Mammary epithelial cell (primary cell): ENCODE measurements at regions of chr10 and their contacts with region 1.

Region 1: DNA sequence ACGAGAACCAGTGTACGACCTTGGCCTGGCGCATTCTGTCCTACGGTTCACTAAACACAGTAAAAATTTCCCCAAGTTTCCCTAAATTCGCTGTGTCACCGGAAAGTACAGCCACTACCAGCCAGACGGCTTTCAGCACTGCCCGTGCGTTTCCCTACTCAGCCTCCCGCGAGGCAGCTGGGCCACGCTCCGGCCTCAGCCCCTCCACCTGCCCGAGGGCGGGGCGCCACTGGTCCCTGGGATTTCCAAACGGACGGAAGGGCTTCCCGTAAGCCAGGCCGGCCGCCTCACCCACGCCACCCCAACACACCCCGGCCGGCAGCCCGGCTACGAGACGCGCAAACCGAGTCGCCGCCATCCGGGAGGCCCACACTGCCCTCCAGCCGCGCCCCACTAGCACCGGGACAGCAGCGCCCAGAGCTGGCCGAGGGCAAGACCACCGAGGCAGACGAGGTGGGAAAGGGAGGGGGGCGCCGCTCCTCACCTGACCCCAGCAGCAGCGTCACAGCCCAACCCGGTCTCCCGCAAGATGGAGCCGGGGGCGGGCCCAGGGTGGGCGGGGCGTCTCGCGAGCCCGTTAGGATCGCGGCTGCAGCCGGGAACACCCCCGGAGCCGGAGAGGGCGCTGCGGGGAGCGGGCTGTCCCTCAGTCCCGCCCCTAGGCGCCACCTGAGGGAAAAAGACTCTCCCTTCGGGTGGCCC is at the start of gene ANXA7:
- DNase-seq: peak; percentile 89
- H3K4me3 ChIP-seq: peak within 1 kb of the TSS; percentile 51 to 100 (median 92)
- H3K27ac ChIP-seq: peak within 1 kb of the TSS; percentile 92
- H3K4me1 ChIP-seq: peaks cover 15% of the 10 kb centered on the region
- H3K27me3 ChIP-seq: no peaks in the 10 kb centered on the region
- CTCF ChIP-seq: peak in 1 of 2 donors; percentile 36
- total RNA-seq, gene ANXA7: 107 to 134 TPM

Region 2: GRCh38 chr10:73225518-73225917 is 188.2 kb before region 1 on chr10:
- CTCF ChIA-PET with region 1: no interaction called
- dilution Hi-C with region 1: no loop called
- in situ Hi-C with region 1: no loop called
- intact Hi-C with region 1: no loop called
- DNase-seq: peak; percentile 47
- H3K4me3 ChIP-seq: no peak overlapping the region
- H3K27ac ChIP-seq: no peak overlapping the region
- H3K4me1 ChIP-seq: no peaks in the 10 kb centered on the region
- H3K27me3 ChIP-seq: no peaks in the 10 kb centered on the region
- CTCF ChIP-seq: no peak

Region 3: DNA sequence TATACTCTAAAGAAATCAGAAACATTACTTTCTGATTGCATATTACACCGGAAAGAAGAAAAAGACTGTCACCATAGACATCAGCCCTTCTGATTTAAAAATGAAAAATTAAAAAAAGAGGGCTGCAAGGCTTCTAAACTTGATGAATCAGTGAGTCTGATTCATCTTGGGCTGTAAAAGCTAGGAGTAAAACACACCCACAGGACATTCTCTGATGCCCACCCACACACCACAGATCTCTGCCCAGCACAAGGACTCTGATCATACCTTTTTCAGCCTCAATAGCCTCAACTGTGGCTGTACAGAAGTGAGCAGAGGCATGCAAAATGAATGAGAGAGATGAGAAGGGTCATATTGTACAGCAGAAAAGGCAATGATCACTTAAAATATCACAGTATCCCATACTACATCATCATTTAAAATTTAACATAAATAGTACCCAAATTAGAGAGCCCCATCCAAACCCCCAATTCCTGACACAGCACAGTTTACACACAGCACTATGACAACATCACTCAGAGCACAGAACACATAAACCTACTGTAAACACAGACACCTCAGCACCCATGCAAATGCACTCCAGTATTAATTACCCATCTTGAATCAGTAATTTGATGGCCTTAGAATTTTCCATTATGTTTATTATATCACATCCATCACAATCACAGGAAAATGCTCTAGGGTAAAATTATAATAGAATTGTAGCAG is 26.1 kb after region 1 on chr10:
- CTCF ChIA-PET with region 1: no interaction called
- dilution Hi-C with region 1: no loop called
- in situ Hi-C with region 1: no loop called
- intact Hi-C with region 1: loop called (anchors 1 kb)
- DNase-seq: peak; percentile 64
- H3K4me3 ChIP-seq: no peak overlapping the region
- H3K27ac ChIP-seq: no peak overlapping the region
- H3K4me1 ChIP-seq: peaks cover 16% of the 10 kb centered on the region
- H3K27me3 ChIP-seq: no peaks in the 10 kb centered on the region
- CTCF ChIP-seq: no peak

Region 4: DNA sequence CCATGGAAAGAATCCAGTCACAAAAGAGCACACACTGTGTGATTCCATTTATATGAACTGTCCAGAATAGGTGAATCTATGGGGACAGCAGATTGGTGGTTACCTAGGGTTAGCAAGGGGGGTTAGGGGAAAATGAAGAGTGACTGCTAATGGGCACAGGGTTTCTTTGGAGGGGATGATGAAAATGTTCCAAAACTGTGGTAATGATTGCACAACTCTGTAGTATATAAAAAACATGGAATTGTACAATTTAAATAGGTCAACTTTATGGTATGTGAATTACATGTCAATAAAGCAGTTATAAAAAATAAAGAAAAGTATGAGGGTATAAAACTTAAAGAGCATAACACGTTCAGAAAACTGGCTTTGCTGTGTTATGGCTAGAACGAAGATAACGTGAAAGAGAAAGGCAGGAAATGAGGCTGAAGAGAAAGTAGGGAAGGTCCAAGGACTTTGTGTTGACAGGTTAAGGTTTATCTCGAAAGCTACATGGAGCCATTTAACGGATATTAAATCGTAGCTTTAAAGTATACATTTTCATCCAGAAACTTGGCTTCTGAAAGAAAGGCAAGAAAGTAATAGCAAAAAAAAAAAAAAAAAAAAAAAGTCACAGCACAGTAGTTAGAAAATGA is 46.1 kb after region 1 on chr10:
- CTCF ChIA-PET with region 1: no interaction called
- dilution Hi-C with region 1: no loop called
- in situ Hi-C with region 1: no loop called
- intact Hi-C with region 1: no loop called
- DNase-seq: no peak
- H3K4me3 ChIP-seq: no peak overlapping the region
- H3K27ac ChIP-seq: no peak overlapping the region
- H3K4me1 ChIP-seq: no peaks in the 10 kb centered on the region
- H3K27me3 ChIP-seq: no peaks in the 10 kb centered on the region
- CTCF ChIP-seq: no peak

Region 5: DNA sequence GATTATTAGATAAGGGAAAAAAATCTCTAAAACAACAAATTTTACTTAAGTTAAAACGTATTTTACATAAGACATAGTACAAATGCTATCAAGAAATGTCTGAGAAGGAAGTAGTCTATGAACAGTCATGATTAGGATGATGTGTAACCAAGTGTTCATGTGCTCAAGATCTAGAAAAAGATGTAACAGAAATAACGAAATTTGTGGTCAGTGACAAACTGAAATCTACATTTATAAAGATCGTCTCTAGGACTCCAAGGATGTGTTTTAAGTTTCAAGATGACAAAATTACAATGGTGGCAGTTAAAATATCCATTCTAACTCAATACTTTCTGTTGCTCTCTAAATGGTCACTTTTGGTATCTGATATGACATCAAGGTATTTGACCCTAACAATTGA is 65.0 kb after region 1 on chr10:
- CTCF ChIA-PET with region 1: no interaction called
- dilution Hi-C with region 1: no loop called
- in situ Hi-C with region 1: no loop called
- intact Hi-C with region 1: loop called (anchors 5 kb)
- DNase-seq: no peak
- H3K4me3 ChIP-seq: no peak overlapping the region
- H3K27ac ChIP-seq: no peak overlapping the region
- H3K4me1 ChIP-seq: peaks cover 10% of the 10 kb centered on the region
- H3K27me3 ChIP-seq: no peaks in the 10 kb centered on the region
- CTCF ChIP-seq: no peak

Region 6: DNA sequence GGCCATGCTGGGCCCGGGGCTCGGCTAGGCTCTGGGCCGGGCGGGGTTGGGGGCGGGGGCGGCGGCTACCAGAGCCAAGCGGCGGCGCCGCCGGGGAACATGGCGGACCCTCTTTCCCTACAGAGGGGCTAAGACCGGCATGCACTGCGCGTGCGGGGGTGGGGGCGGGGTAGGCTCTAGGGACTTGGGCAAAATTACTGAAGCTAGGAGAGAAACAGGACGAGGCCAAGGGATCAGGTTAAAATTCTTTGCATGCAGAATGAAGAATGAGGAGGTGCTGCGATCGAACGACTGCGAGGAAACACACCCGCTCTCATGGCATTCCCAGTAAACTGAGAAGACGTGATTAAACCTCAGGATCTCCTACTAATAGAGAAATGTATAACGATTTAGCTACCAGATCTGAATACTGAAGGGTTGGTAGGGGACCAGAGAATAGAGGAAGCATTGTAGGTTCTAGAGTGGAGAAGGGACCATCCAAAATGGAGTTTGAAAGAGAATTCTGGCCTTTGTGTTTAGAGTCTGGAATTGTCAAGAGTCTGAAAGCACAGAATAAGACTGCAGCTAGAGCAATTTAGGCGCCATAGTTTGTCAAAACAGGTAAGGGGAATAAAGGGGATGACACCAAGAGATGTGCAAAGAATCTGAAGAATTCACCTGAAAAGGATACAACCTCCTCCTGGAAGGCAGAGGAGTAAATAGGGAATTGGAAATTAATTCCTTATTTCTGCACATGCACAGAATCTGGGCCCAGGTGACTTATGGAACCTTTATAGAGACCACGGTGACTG is 82.4 kb after region 1 on chr10 and contains the start of gene PPP3CB:
- CTCF ChIA-PET with region 1: no interaction called
- dilution Hi-C with region 1: no loop called
- in situ Hi-C with region 1: no loop called
- intact Hi-C with region 1: loop called (anchors 1 kb)
- DNase-seq: peak; percentile 96
- H3K4me3 ChIP-seq: peak within 1 kb of the TSS; percentile 73 to 93 (median 74)
- H3K27ac ChIP-seq: peak within 1 kb of the TSS; percentile 75
- H3K4me1 ChIP-seq: peaks cover 23% of the 10 kb centered on the region
- H3K27me3 ChIP-seq: no peaks in the 10 kb centered on the region
- CTCF ChIP-seq: no peak
- total RNA-seq, gene PPP3CB: 21.2 to 30.9 TPM

Region 7: GRCh38 chr10:73644015-73644743 is 230.5 kb after region 1 on chr10:
- CTCF ChIA-PET with region 1: no interaction called
- dilution Hi-C with region 1: no loop called
- in situ Hi-C with region 1: no loop called
- intact Hi-C with region 1: loop called (anchors 10 kb)
- DNase-seq: peak; percentile 31
- H3K4me3 ChIP-seq: no peak overlapping the region
- H3K27ac ChIP-seq: no peak overlapping the region
- H3K4me1 ChIP-seq: peaks cover 8% of the 10 kb centered on the region
- H3K27me3 ChIP-seq: no peaks in the 10 kb centered on the region
- CTCF ChIP-seq: peak; percentile 84 to 87